ENCODE measurements at regions of chr15 and their contacts with region 1.

Region 1: GRCh38 chr15:58292751-58293175 is 139.0 kb upstream of the LIPC start:
- DNase-seq: no peak
- ATAC-seq: no peak
- H3K4me3 ChIP-seq: no peak overlapping the region
- H3K4me3 Mint-ChIP-seq: peak overlapping the region in 1 of 10 donors; percentile 40
- H3K27ac ChIP-seq: no peak overlapping the region
- H3K27ac Mint-ChIP-seq: peak overlapping the region in 1 of 9 donors; percentile 36
- H3K4me1 ChIP-seq: no peaks in the 10 kb centered on the region
- H3K4me1 Mint-ChIP-seq: peaks cover 4 to 41% (median 6%) of the 10 kb centered on the region in 7 donors
- H3K27me3 ChIP-seq: no peaks in the 10 kb centered on the region
- H3K27me3 Mint-ChIP-seq: peaks cover 0 to 4% (median 0%) of the 10 kb centered on the region in 5 donors

Region 2: DNA sequence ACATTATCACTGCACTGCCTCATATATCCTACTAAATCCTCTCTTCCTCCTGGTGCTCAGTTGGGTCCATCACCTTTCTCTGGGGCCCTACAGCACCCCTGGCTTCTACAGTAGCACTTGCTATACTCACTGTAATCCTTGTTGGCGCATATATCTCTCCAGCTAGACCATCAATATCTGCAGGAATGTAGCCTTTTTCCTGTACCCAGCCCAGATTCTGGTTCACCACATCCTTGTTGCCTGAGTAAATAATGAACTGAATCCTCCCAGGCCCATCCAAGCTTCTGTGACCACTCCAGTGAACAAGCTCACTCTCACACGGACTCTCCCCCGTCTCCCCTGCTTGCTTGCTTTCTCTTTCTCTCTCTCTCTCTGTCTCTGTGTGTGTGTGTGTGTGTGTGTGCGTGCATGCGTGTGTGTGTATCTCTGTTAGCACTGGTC is 76.5 kb after region 1 on chr15:
- CTCF ChIA-PET with region 1: no interaction called
- POLR2A ChIA-PET with region 1: no interaction called
- intact Hi-C with region 1: loop called in 1 of 2 experiments (anchors 5 kb)
- DNase-seq: peak in 6 of 9 donors; percentile 10 to 71 (median 36)
- ATAC-seq: peak; percentile 84
- H3K4me3 ChIP-seq: no peak overlapping the region
- H3K4me3 Mint-ChIP-seq: peak overlapping the region; percentile 27 to 86 (median 66)
- H3K27ac ChIP-seq: no peak overlapping the region
- H3K27ac Mint-ChIP-seq: peak overlapping the region in 4 of 9 donors; percentile 13 to 62 (median 42)
- H3K4me1 ChIP-seq: no peaks in the 10 kb centered on the region
- H3K4me1 Mint-ChIP-seq: peaks cover 9 to 23% (median 13%) of the 10 kb centered on the region in 7 donors
- H3K27me3 ChIP-seq: no peaks in the 10 kb centered on the region
- H3K27me3 Mint-ChIP-seq: peaks cover 0 to 5% (median 0%) of the 10 kb centered on the region in 5 donors

Region 3: GRCh38 chr15:58898150-58898680 is 605.5 kb after region 1 on chr15:
- CTCF ChIA-PET with region 1: no interaction called
- POLR2A ChIA-PET with region 1: no interaction called
- intact Hi-C with region 1: no loop called
- DNase-seq: no peak
- ATAC-seq: no peak
- H3K4me3 ChIP-seq: no peak overlapping the region
- H3K4me3 Mint-ChIP-seq: no peak overlapping the region
- H3K27ac ChIP-seq: no peak overlapping the region
- H3K27ac Mint-ChIP-seq: peak overlapping the region in 3 of 9 donors; percentile 20 to 59 (median 27)
- H3K4me1 ChIP-seq: no peaks in the 10 kb centered on the region
- H3K4me1 Mint-ChIP-seq: peaks cover 4 to 26% (median 16%) of the 10 kb centered on the region in 7 donors
- H3K27me3 ChIP-seq: no peaks in the 10 kb centered on the region
- H3K27me3 Mint-ChIP-seq: no peaks in the 10 kb centered on the region